IMR-90 (cell line): ENCODE measurements at regions of chr22 and their contacts with region 1.

Region 1: DNA sequence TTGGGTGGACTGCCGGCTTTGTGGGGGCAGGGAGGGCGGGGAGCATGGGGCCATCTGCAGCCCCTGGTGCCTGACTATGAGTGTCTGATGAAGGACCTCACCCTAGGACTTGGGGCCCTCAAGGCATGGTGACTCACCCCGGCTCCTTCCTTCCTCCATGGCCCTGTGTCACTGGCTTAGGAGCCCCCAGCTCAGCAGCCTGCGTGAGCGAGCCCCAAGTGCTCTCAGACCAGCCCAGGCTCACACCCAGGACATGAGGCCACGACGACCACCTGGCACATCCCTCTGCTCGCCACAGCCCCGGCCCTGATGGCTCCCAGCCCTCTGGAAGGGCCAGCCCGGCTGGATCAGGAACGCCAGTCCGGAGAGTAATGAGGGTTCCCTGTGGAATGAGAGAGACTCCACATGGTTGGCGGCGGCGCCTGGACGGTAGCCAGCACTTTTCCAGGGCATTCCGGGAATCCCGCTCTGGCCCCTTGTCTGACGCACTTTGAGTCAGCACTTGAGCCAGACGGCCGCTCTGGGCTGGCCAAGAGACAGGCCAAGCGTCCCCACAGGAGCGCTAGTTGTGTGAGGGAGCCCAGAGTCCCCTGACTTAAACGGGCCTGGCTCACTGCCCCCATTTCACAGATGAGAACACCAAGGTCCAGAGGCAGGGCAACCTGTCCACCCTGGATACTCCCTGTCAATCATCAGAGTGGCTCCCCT is 50.7 kb upstream of the SHISAL1 start:
- DNase-seq: peak; percentile 98
- ATAC-seq: peak; percentile 79
- H3K4me3 ChIP-seq: no peak overlapping the region
- H3K27ac ChIP-seq: peak overlapping the region; percentile 96
- H3K4me1 ChIP-seq: peaks cover 48% of the 10 kb centered on the region
- H3K27me3 ChIP-seq: no peaks in the 10 kb centered on the region
- CTCF ChIP-seq: no peak
- POLR2A ChIP-seq: peak; percentile 81
- RAD21 ChIP-seq: peak; percentile 31; the same call in 1 of the 2 replicates

Region 2: DNA sequence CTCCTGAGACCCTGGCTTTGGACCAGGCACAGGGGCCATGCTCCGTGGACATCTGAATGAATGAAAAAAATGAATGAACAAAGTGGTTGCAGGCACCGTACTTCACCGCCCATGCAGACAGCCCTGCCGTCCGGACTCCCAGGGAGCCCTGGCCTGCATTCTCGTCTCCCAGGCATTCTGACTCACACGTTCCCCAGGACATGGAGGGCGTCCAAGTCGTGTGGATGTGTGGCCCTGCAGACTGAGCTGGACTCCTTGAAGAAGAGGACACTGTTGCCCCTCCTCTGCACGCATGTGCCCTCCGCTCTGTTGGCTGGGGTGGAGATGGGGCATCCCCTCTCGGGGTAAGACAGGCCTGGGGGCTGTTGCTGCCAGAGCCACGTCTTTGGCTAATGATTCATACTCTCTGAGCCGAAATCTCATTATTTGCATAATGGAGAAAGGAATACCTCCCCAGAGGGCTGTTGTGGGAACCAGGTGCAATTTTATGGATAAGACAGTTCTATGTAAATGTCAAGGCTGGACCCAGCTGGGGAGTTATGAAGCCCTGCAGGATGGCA is 84.9 kb after region 1 on chr22:
- CTCF ChIA-PET with region 1: no interaction called
- POLR2A ChIA-PET with region 1: no interaction called
- dilution Hi-C with region 1: no loop called
- in situ Hi-C with region 1: no loop called
- intact Hi-C with region 1: loop called (anchors 5 kb)
- DNase-seq: peak; percentile 94
- ATAC-seq: peak; percentile 88
- H3K4me3 ChIP-seq: no peak overlapping the region
- H3K27ac ChIP-seq: peak overlapping the region; percentile 73
- H3K4me1 ChIP-seq: peaks cover 20% of the 10 kb centered on the region
- H3K27me3 ChIP-seq: no peaks in the 10 kb centered on the region
- CTCF ChIP-seq: no peak
- POLR2A ChIP-seq: peak; percentile 63; the same call in 1 of the 2 replicates
- RAD21 ChIP-seq: peak; percentile 34

Region 3: DNA sequence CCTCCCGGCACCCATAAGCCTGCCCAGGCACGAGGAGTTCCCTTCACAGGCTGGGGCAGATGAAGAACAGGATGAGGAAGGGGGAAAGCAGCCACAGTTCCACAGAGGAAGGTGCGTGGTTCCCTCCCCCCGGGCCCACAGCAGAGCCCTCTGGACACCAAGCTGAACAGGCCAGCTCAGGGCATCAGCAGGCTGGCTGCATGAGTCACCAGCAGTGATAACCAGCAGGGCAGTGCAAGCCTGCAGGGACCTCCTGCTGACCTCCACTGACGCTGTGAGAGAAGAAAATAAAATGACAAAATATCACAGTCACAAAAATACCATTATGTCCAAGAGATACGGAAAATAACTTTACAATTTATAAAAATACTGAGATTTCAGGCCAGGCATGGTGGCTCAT is 123.1 kb after region 1 on chr22:
- CTCF ChIA-PET with region 1: no interaction called
- POLR2A ChIA-PET with region 1: no interaction called
- dilution Hi-C with region 1: no loop called
- in situ Hi-C with region 1: no loop called
- intact Hi-C with region 1: loop called (anchors 10 kb)
- DNase-seq: peak; percentile 27
- ATAC-seq: peak; percentile 86
- H3K4me3 ChIP-seq: no peak overlapping the region
- H3K27ac ChIP-seq: no peak overlapping the region
- H3K4me1 ChIP-seq: peaks cover 10% of the 10 kb centered on the region
- H3K27me3 ChIP-seq: no peaks in the 10 kb centered on the region
- CTCF ChIP-seq: no peak
- POLR2A ChIP-seq: no peak
- RAD21 ChIP-seq: no peak